A549 (cell line): ENCODE measurements at regions of chr1 and their contacts with region 1.

Region 1: DNA sequence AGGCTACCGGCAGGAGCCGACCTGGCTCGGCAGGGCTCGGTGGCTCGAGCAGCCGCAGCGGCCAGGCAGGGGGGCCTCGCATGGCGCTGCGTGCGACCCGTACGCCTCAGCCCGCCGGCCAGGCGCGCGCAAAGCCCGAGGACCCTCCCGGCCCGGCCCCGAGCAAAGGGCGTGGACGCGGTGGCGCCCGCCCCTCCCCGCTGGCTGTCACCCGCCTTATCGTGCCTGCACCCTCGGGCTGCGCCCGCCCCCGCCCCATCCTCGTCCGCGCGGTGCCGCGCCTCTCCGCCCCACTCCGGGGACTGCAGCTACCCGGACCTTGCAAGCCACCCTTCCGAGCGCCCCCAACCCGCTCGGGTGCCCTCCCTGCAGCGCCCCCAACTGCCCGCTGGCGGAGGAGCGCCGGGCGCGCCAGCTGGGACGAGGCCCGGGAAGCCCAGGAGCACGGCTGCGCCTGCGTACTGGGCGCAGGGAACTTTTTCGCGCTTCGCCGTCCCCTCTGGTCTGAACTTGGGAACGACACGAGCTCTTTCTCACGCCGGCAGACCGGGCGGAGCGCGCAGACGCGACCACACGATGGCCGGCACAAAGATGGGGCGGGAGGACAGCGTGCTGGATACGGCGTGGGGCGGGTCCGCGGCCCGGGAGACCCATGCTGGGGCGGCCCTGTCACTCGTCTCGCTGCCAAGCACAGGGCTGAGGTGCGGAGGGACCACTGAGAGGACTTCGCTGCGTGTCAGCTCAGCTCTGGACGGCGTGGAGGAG is at the start of gene ABCB10:
- DNase-seq: peak; percentile 97 to 98
- ATAC-seq: peak; percentile 87 to 94
- H3K4me3 ChIP-seq: peak within 1 kb of the TSS; percentile 79
- H3K27ac ChIP-seq: peak within 1 kb of the TSS; percentile 90 to 97
- H3K4me1 ChIP-seq: peaks cover 17% of the 10 kb centered on the region
- CTCF ChIP-seq: peak; percentile 89
- EP300 ChIP-seq: no peak
- POLR2A ChIP-seq: peak; percentile 84
- RAD21 ChIP-seq: peak in 1 of 2 experiments; percentile 43; a peak in 1 of 5 replicates
- polyA plus RNA-seq, gene ABCB10: 15.1 and 16.3 TPM in 2 replicates

Region 2: GRCh38 chr1:229507951-229508822 is 50.6 kb before region 1 on chr1 and contains the start of gene NUP133:
- CTCF ChIA-PET with region 1: interaction called, 8 read pairs
- POLR2A ChIA-PET with region 1: interaction called, 19 read pairs
- DNase-seq: peak; percentile 93 to 99
- ATAC-seq: peak; percentile 97
- H3K4me3 ChIP-seq: peak within 1 kb of the TSS; percentile 82
- H3K27ac ChIP-seq: peak within 1 kb of the TSS; percentile 90 to 94
- H3K4me1 ChIP-seq: peaks cover 18% of the 10 kb centered on the region
- CTCF ChIP-seq: no peak
- EP300 ChIP-seq: no peak
- POLR2A ChIP-seq: peak; percentile 94
- RAD21 ChIP-seq: no peak
- polyA plus RNA-seq, gene NUP133: 43.2 and 45.9 TPM in 2 replicates

Region 3: DNA sequence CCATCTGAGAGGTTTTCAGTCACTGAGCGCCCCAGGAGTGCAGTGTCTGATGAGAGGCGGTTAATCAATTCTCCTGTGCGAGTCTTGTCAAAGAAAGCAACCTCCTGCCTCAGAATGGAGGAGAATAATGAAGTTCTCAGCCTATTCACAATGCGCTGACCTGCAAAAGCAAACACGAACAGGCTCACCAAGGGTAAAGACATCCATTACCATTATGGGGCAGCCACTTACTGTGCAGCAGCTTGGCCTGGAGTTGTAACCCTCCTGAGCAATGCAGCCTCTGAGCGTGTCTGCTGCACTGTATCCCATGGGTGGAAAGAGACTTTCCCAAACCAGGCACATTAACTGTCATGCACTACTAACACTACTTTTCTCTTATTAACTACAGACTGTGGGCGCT is 11.2 kb before region 1 on chr1:
- CTCF ChIA-PET with region 1: interaction called, 25 read pairs
- POLR2A ChIA-PET with region 1: no interaction called
- DNase-seq: no peak
- ATAC-seq: no peak
- H3K4me3 ChIP-seq: no peak overlapping the region
- H3K27ac ChIP-seq: no peak overlapping the region
- H3K4me1 ChIP-seq: no peaks in the 10 kb centered on the region
- CTCF ChIP-seq: no peak
- EP300 ChIP-seq: no peak
- POLR2A ChIP-seq: no peak
- RAD21 ChIP-seq: no peak

Region 4: DNA sequence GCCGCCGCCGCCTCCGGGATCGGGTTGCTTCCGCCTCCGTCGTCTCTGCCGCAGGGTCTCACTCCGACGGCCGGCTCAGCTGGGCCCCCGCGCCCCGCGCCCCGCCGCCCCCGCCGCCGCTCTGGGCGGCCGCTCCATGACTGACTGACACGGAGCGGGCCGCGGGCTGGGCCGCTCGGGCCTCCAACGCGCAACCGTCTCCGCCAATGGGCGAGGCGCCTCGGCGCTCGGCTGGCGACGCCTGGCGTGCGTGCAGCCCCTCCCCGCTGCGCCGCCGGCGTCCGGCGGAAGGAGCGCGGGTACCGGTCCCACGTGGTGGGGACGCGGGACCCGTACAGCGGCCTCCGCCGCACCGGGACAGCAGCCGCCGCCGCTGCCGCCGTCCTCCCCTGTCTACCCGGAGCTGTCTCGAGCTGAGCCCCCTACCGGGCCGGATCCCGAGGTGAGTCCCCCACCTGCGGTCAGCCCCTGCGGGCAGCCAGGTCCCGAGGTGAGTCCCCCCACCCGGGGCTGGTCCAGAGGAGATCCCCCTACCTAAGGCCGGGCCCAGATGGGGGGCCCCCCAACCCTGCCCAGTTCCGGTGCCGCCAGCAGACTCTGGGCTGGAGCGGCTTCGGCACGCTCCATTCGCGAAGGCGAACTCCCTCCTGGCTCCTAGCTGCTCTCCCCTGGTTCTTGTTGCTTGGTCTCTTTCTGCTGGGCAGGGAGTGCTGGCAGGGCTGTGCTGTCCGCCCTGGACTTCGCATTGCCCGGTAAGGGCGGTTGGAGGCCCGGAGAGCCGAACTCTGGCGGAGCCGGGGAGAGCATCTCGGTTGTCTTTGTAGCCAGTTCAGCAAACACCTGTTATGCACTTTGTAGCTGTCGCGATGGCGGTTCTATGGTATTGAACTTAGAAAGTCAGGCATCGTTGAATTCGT is 67.4 kb after region 1 on chr1 and contains the starts of genes TAF5L and URB2:
- CTCF ChIA-PET with region 1: interaction called, 13 read pairs
- POLR2A ChIA-PET with region 1: interaction called, 11 read pairs
- DNase-seq: peak; percentile 90 to 92
- ATAC-seq: peak; percentile 95 to 98
- H3K4me3 ChIP-seq: peak within 1 kb of the TSS; percentile 73
- H3K27ac ChIP-seq: peak within 1 kb of the TSS; percentile 93 to 98
- H3K4me1 ChIP-seq: peaks cover 26% of the 10 kb centered on the region
- CTCF ChIP-seq: no peak
- EP300 ChIP-seq: no peak
- POLR2A ChIP-seq: peak; percentile 86
- RAD21 ChIP-seq: no peak
- polyA plus RNA-seq, gene TAF5L: 25.0 and 27.7 TPM in 2 replicates
- polyA plus RNA-seq, gene URB2: 15.7 and 19.6 TPM in 2 replicates

Region 5: DNA sequence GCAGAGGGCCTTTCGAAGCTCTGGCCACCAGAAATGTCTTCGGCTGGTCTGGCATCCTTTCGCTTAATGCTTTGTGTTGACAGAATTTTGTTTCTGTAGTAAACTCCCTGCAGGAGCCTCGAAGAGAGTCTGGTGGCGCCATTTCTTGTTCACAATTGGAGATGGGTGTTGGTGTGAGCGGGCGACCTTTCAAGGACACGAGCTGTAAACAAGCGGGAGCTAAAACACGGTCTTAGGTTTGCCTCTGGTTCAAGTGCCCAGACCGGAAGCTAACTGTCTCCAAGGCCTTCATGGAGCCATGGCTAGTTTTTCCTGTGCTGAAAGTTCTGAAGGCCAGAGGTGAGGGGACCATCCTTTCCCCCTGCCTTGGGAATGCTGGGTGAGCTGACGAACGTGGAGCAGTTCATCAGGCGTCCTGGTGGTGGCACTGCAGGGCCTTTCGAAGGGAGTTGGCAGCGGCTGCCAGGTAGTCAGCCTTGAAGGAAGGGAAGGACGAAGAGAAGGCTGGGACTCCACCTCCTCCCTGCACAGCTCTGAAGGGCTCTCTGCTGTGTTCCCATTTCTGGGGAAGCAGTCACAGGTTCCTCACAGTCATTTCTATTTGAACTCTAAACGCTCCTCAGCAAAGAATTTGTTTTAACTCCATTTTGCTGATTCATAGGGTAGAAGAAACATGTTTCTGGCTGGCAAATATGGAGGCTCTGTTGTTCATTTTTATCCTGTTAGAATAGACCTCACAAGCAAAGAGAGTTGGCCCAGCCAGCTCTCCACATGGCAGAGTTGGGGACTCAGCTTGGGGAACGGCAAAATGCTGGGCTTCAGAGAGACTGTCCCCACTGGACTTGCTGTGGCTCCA is 102.5 kb after region 1 on chr1:
- CTCF ChIA-PET with region 1: no interaction called
- POLR2A ChIA-PET with region 1: no interaction called
- DNase-seq: peak; percentile 70 to 86
- ATAC-seq: peak; percentile 84 to 96
- H3K4me3 ChIP-seq: no peak overlapping the region
- H3K27ac ChIP-seq: peak overlapping the region; percentile 59 to 67; a peak in 5 of 6 replicates
- H3K4me1 ChIP-seq: peaks cover 4% of the 10 kb centered on the region; the same call in 1 of the 3 replicates
- CTCF ChIP-seq: peak; percentile 71
- EP300 ChIP-seq: no peak
- POLR2A ChIP-seq: no peak
- RAD21 ChIP-seq: peak; percentile 82 to 87